Heart left ventricle (tissue), 16 donors: ENCODE measurements at regions of chr2 and their contacts with region 1.

Region 1: GRCh38 chr2:102342891-102343290 is 12.7 kb upstream of the IL18R1 start:
- DNase-seq: no peak
- ATAC-seq: no peak
- H3K4me3 ChIP-seq: no peak overlapping the region
- H3K27ac ChIP-seq: no peak overlapping the region
- H3K4me1 ChIP-seq: peaks cover 0 to 7% (median 0%) of the 10 kb centered on the region in 12 donors
- H3K27me3 ChIP-seq: no peaks in the 10 kb centered on the region
- CTCF ChIP-seq: peak in 4 of 12 donors; percentile 27 to 36 (median 31)
- POLR2A ChIP-seq: no peak

Region 2: GRCh38 chr2:102005989-102006885 is 336.7 kb before region 1 on chr2:
- intact Hi-C with region 1: loop called in 2 of 10 experiments (anchors 10 kb)
- DNase-seq: peak in 1 of 5 donors; percentile 34
- ATAC-seq: peak; percentile 50 to 84 (median 70)
- H3K4me3 ChIP-seq: no peak overlapping the region
- H3K27ac ChIP-seq: no peak overlapping the region
- H3K4me1 ChIP-seq: peaks cover 0 to 29% (median 6%) of the 10 kb centered on the region in 12 donors
- H3K27me3 ChIP-seq: no peaks in the 10 kb centered on the region
- CTCF ChIP-seq: peak; percentile 36 to 73 (median 60)
- POLR2A ChIP-seq: no peak

Region 3: GRCh38 chr2:102268510-102269209 is 74.2 kb before region 1 on chr2:
- intact Hi-C with region 1: loop called in 1 of 10 experiments (anchors 10 kb)
- DNase-seq: no peak
- ATAC-seq: no peak
- H3K4me3 ChIP-seq: no peak overlapping the region
- H3K27ac ChIP-seq: peak overlapping the region in 1 of 12 donors; percentile 6
- H3K4me1 ChIP-seq: peaks cover 0 to 21% (median 0%) of the 10 kb centered on the region in 12 donors
- H3K27me3 ChIP-seq: peaks cover 0 to 15% (median 0%) of the 10 kb centered on the region in 9 donors
- CTCF ChIP-seq: no peak
- POLR2A ChIP-seq: no peak

Region 4: DNA sequence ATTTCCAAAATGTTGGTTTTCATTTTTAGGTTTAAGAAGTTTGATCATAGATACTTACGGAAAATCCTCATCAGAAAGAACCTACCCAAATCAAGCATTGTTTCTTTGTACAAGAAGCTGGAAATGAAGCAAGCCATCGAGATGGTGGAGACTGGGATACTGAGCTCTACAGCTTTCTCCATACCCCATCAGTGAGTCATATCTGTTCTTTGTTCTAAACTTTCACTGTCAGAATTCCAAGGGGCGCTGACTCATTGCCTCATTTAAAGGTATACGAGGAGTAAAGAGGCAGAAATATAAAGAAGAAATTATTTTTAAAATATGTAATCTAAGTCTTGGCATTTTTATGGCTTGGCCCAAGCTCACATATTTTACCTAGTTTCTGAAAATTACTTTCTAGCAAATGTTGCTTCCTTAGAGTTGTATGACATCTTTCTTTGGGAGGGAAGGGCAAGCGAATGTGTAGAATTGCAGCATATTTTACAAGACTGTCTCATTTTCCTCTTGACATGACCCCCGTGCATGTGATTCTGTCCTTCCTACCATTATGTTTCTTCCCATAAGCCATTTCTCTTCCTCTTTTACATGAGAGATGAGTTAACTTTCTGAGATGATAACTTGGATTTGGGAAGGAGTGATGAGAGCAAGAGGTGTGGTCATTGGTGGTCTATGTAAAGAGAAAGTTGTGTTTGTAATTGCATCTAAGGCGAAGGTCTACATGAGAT is 171.3 kb after region 1 on chr2:
- intact Hi-C with region 1: no loop called
- DNase-seq: no peak
- ATAC-seq: no peak
- H3K4me3 ChIP-seq: no peak overlapping the region
- H3K27ac ChIP-seq: no peak overlapping the region
- H3K4me1 ChIP-seq: peaks cover 0 to 4% (median 0%) of the 10 kb centered on the region in 12 donors
- H3K27me3 ChIP-seq: no peaks in the 10 kb centered on the region
- CTCF ChIP-seq: no peak
- POLR2A ChIP-seq: no peak